Ovary (tissue), 10 donors: ENCODE measurements at regions of chr9 and their contacts with region 1.

Region 1: GRCh38 chr9:97873877-97874276 is 20.9 kb downstream of the FOXE1 start:
- DNase-seq: no peak
- H3K4me3 ChIP-seq: no peak overlapping the region
- H3K27ac ChIP-seq: no peak overlapping the region
- H3K4me1 ChIP-seq: no peaks in the 10 kb centered on the region
- H3K27me3 ChIP-seq: no peaks in the 10 kb centered on the region
- CTCF ChIP-seq: no peak
- EP300 ChIP-seq: no peak
- POLR2A ChIP-seq: no peak

Region 2: DNA sequence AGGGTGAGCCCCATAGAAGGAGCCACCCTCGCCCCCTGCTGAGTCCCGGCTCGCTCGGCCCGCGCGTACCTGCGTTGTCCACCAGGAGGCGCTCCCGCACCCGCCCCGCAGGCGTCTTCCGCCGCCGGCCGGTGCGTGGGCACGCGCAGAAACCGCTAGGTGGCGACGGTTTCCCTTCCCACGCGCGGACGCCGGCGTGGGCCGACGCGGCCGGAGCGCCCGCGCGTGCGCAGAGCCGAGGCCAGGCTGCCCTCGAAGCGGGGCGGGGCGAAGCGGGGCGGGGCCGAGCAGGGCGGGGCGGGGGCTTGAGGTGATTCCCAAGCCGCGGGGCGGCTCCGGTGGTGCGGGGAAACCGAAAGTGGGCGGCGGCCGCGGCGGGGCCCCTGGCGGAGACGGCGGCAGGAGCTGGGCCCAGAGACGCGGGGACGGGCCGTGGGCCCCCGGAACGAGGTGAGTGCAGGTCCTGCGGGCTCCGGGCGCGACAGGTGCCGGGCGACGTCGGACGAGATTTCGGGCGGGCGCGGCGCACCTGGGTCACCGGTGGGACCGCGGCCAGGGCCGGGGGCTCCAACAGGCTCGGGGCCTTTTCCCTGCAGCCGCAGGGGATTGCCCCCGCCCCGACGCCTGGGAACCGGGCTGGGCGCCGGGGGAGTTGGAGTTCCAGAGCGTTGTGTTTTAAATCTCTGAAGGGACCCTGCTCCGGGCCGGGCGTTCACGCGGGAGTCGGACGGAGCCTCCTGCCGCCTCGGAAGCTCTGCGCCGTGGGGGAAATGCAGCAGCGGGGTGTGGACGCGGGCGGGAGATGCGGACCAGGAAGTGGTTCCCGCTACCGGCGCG is 461.9 kb before region 1 on chr9 and contains the start of gene TDRD7:
- intact Hi-C with region 1: no loop called
- DNase-seq: peak; percentile 84 to 94 (median 92)
- H3K4me3 ChIP-seq: peak within 1 kb of the TSS; percentile 90
- H3K27ac ChIP-seq: peak within 1 kb of the TSS; percentile 37 to 52
- H3K4me1 ChIP-seq: peaks cover 4% of the 10 kb centered on the region
- H3K27me3 ChIP-seq: no peaks in the 10 kb centered on the region
- CTCF ChIP-seq: peak; percentile 97 to 99 (median 97)
- EP300 ChIP-seq: no peak
- POLR2A ChIP-seq: peak; percentile 18
- total RNA-seq, gene TDRD7: 9.0 to 13.0 (median 9.8) TPM

Region 3: GRCh38 chr9:97559111-97559514 is 314.8 kb before region 1 on chr9:
- intact Hi-C with region 1: no loop called
- DNase-seq: no peak
- H3K4me3 ChIP-seq: no peak overlapping the region
- H3K27ac ChIP-seq: peak overlapping the region; percentile 17 to 84
- H3K4me1 ChIP-seq: peaks cover 45% of the 10 kb centered on the region
- H3K27me3 ChIP-seq: no peaks in the 10 kb centered on the region
- CTCF ChIP-seq: no peak
- EP300 ChIP-seq: no peak
- POLR2A ChIP-seq: no peak

Region 4: DNA sequence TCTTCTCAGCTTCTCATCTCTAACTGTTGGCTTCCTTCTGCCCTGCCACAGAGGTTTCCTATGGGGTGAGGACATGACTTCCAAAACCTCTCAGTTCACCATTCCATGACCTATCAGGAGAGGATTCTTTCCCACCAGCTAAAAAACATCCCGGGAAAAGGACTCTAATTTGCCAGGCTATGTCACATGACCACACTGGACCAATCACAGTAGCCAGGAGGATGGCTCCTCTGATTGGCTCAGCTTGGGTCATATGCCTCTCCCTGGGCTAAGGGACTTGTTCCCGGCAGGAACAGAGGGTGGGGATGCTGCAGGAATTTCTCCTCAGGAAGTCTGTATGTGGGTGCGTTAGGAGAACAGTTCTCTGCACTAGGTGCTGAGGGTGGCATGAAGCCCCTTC is 136.4 kb before region 1 on chr9:
- intact Hi-C with region 1: loop called in 1 of 4 experiments (anchors 10 kb)
- DNase-seq: no peak
- H3K4me3 ChIP-seq: no peak overlapping the region
- H3K27ac ChIP-seq: no peak overlapping the region
- H3K4me1 ChIP-seq: peaks cover 4% of the 10 kb centered on the region
- H3K27me3 ChIP-seq: no peaks in the 10 kb centered on the region
- CTCF ChIP-seq: no peak
- EP300 ChIP-seq: no peak
- POLR2A ChIP-seq: no peak